Activated CD4-positive, alpha-beta T cell treated with anti-CD3 and anti-CD28 coated beads, Interleukin-2, amount 10 ng/mL, durations not matched to agents 24 days and 14 days (primary cell): ENCODE measurements at regions of chr4 and their contacts with region 1.

Region 1: GRCh38 chr4:123444290-123444731 is 47.7 kb downstream of the SPRY1 start:
- DNase-seq: peak; percentile 81
- H3K4me3 Mint-ChIP-seq: peak overlapping the region; percentile 82
- H3K27ac Mint-ChIP-seq: peak overlapping the region; percentile 96
- H3K4me1 Mint-ChIP-seq: peaks cover 24% of the 10 kb centered on the region
- H3K27me3 Mint-ChIP-seq: no peaks in the 10 kb centered on the region

Region 2: GRCh38 chr4:123455360-123455759 is 11.0 kb after region 1 on chr4:
- intact Hi-C with region 1: no loop called
- DNase-seq: no peak
- H3K4me3 Mint-ChIP-seq: no peak overlapping the region
- H3K27ac Mint-ChIP-seq: no peak overlapping the region
- H3K4me1 Mint-ChIP-seq: peaks cover 8% of the 10 kb centered on the region
- H3K27me3 Mint-ChIP-seq: no peaks in the 10 kb centered on the region

Region 3: GRCh38 chr4:123469245-123469644 is 24.9 kb after region 1 on chr4:
- intact Hi-C with region 1: no loop called
- DNase-seq: no peak
- H3K4me3 Mint-ChIP-seq: no peak overlapping the region
- H3K27ac Mint-ChIP-seq: no peak overlapping the region
- H3K4me1 Mint-ChIP-seq: peaks cover 9% of the 10 kb centered on the region
- H3K27me3 Mint-ChIP-seq: peaks cover 3% of the 10 kb centered on the region

Region 4: GRCh38 chr4:123488916-123489315 is 44.6 kb after region 1 on chr4:
- intact Hi-C with region 1: loop called (anchors 1 kb)
- DNase-seq: peak; percentile 63
- H3K4me3 Mint-ChIP-seq: no peak overlapping the region
- H3K27ac Mint-ChIP-seq: peak overlapping the region; percentile 72
- H3K4me1 Mint-ChIP-seq: peaks cover 14% of the 10 kb centered on the region
- H3K27me3 Mint-ChIP-seq: no peaks in the 10 kb centered on the region

Region 5: GRCh38 chr4:123520325-123520724 is 76.0 kb after region 1 on chr4:
- intact Hi-C with region 1: no loop called
- DNase-seq: no peak
- H3K4me3 Mint-ChIP-seq: no peak overlapping the region
- H3K27ac Mint-ChIP-seq: no peak overlapping the region
- H3K4me1 Mint-ChIP-seq: no peaks in the 10 kb centered on the region
- H3K27me3 Mint-ChIP-seq: peaks cover 5% of the 10 kb centered on the region